Ascending aorta (tissue), 2 donors: ENCODE measurements at regions of chr10 and their contacts with region 1.

Region 1: DNA sequence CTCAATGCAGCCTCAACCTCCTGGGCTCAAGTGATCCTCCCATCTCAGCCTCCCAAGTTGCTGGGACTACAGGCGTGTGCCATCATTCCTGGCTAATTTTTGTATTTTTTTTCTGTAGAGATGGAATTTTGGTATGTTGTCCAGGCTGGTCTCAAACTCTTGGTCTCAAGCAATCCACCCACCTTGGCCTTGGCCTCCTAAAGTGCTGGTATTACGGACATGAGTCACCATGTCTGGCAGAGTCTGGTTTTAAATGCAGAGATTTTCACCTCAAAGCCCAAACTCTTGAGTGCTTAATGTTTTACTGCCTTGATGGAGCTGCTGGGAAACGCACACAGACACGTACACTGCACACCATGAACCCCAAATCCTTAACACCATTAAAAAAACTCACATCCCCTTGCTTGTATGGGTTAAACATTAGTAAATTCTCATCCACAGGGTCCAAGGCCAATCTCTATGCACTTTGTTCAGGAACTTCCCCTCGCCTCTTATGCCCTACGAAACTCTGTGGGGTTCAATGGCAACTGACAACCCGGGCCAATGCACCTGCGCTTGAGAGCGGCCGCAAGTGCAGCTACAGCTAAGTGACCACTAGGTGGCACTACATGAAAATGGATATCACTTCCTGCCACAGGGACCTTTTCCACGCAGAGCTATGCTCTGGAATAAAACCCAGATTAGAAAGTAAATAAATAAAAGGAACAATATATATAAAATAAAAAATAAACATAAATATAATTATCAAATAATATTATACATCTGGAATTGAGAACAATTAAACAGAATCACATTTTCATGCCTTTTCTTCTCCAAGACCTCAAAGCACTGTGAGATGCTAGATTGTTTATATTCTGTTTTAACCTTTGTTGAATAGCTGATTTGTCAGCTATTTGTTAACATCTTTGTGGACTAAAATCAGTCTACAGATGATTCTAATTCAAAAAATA is 66.9 kb upstream of the AFAP1L2 start:
- DNase-seq: peak in 1 of 2 donors; percentile 75
- H3K4me3 ChIP-seq: no peak overlapping the region
- H3K27ac ChIP-seq: no peak overlapping the region
- H3K4me1 ChIP-seq: no peaks in the 10 kb centered on the region
- H3K27me3 ChIP-seq: no peaks in the 10 kb centered on the region
- CTCF ChIP-seq: peak; percentile 75 to 94 (median 92)

Region 2: GRCh38 chr10:114703377-114704107 is 232.3 kb after region 1 on chr10:
- intact Hi-C with region 1: loop called (anchors 5 kb)
- DNase-seq: no peak
- H3K4me3 ChIP-seq: no peak overlapping the region
- H3K27ac ChIP-seq: no peak overlapping the region
- H3K4me1 ChIP-seq: no peaks in the 10 kb centered on the region
- H3K27me3 ChIP-seq: no peaks in the 10 kb centered on the region
- CTCF ChIP-seq: peak; percentile 41 to 63 (median 56)

Region 3: DNA sequence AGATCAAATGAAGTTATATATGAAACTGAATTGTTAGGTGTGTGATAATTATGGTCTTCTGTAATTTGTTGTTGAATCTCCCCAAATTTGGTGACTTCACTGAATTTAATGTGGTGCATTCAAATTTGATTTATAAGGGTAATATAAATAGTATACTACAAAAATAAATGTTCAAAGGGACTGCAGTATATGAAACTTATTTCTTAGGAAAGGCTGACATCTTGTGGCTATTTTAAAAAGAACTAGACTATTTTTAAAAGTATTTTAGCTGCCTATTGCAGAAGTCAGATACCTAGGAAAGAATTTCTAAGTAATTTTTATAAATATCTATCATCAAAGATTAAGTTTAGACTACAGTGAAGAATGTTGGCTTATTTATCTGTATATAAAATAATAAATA is 658.5 kb after region 1 on chr10:
- intact Hi-C with region 1: loop called (anchors 10 kb)
- DNase-seq: no peak
- H3K4me3 ChIP-seq: no peak overlapping the region
- H3K27ac ChIP-seq: no peak overlapping the region
- H3K4me1 ChIP-seq: no peaks in the 10 kb centered on the region
- H3K27me3 ChIP-seq: no peaks in the 10 kb centered on the region
- CTCF ChIP-seq: peak; percentile 30 to 54 (median 42)